H1 (cell line): ENCODE measurements at regions of chr7 and their contacts with region 1.

Region 1: GRCh38 chr7:8035647-8036518 is 67.3 kb downstream of the GLCCI1 start:
- DNase-seq: peak in 1 of 2 experiments; percentile 49
- H3K4me3 ChIP-seq: no peak overlapping the region
- H3K27ac ChIP-seq: no peak overlapping the region
- H3K4me1 ChIP-seq: peaks cover 0 to 2% (median 0%) of the 10 kb centered on the region in 4 experiments; a peak in 3 of 7 replicates
- H3K27me3 ChIP-seq: no peaks in the 10 kb centered on the region
- CTCF ChIP-seq: peak in 2 of 3 experiments; percentile 62 to 71; a peak in 3 of 4 replicates
- EP300 ChIP-seq: no peak
- POLR2A ChIP-seq: no peak
- RAD21 ChIP-seq: peak; percentile 81 to 84

Region 2: GRCh38 chr7:7662527-7662926 is 373.4 kb before region 1 on chr7:
- CTCF ChIA-PET with region 1: interaction called, 11 read pairs
- POLR2A ChIA-PET with region 1: no interaction called
- DNase-seq: peak in 1 of 2 experiments; percentile 52
- H3K4me3 ChIP-seq: no peak overlapping the region
- H3K27ac ChIP-seq: no peak overlapping the region
- H3K4me1 ChIP-seq: no peaks in the 10 kb centered on the region
- H3K27me3 ChIP-seq: no peaks in the 10 kb centered on the region
- CTCF ChIP-seq: peak; percentile 39 to 69 (median 58)
- EP300 ChIP-seq: no peak
- POLR2A ChIP-seq: no peak
- RAD21 ChIP-seq: peak; percentile 82 to 83

Region 3: DNA sequence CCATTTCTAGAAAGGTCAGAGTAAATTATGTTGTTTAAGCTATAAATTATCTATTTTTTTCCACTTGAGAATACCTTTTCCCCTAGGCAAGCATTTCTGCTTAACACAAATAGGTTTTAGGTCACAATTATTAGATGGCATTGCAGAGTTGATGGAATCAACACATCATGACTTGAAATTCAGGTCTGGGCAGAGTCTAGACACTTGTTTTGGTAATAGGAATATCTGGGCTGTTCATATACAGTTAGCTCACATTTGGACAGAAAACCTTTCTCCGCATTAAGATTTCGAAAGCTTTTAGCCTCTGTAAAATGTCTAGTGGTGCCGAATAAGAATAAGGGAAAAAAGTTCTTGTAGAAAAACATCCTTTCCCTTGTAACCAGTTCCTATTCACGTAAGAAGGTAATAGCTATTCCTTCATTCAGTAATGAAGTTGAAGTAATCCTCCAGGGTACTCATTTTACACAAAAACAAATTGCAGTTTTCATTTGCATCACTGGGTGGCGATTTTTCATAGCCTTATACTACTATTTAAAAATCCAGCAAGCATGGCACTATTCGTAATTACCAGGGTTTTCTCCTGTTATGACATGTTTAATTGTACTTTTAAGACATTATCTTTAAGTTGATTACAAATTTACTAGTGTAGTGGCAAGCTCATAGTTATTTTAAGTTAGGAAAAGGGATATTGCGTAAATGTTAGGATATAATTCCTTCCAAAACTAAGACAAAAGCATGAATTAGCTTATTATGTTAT is 354.5 kb before region 1 on chr7:
- CTCF ChIA-PET with region 1: interaction called, 10 read pairs
- POLR2A ChIA-PET with region 1: no interaction called
- DNase-seq: no peak
- H3K4me3 ChIP-seq: no peak overlapping the region
- H3K27ac ChIP-seq: no peak overlapping the region
- H3K4me1 ChIP-seq: no peaks in the 10 kb centered on the region
- H3K27me3 ChIP-seq: no peaks in the 10 kb centered on the region
- CTCF ChIP-seq: peak in 1 of 3 experiments; percentile 33; a peak in 2 of 4 replicates
- EP300 ChIP-seq: no peak
- POLR2A ChIP-seq: no peak
- RAD21 ChIP-seq: peak; percentile 56 to 63

Region 4: GRCh38 chr7:8018961-8019360 is 16.9 kb before region 1 on chr7:
- CTCF ChIA-PET with region 1: interaction called, 22 read pairs
- POLR2A ChIA-PET with region 1: no interaction called
- DNase-seq: no peak
- H3K4me3 ChIP-seq: no peak overlapping the region
- H3K27ac ChIP-seq: no peak overlapping the region
- H3K4me1 ChIP-seq: no peaks in the 10 kb centered on the region
- H3K27me3 ChIP-seq: no peaks in the 10 kb centered on the region
- CTCF ChIP-seq: no peak
- EP300 ChIP-seq: no peak
- POLR2A ChIP-seq: no peak
- RAD21 ChIP-seq: no peak

Region 5: DNA sequence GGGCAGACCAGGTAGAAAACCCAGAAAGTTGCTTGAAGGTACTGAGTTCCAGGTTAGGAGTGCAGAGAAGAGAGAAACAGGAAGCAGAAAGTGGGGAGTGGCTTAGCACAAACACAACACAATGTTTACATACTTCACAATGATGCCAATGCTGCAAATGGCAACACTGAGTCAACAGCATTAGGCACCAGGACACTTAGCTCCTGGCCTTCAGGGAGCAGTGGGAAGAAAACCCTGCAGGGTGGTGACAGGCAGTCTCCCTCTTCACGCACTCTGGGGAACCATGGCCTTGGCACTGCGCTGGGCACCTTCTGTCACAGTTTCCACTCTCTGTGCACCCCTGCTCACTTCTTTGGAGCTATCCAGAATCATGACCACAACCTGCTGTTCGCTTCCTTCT is 218.8 kb after region 1 on chr7:
- CTCF ChIA-PET with region 1: no interaction called
- POLR2A ChIA-PET with region 1: no interaction called
- DNase-seq: no peak
- H3K4me3 ChIP-seq: no peak overlapping the region
- H3K27ac ChIP-seq: no peak overlapping the region
- H3K4me1 ChIP-seq: peaks cover 0 to 6% (median 0%) of the 10 kb centered on the region in 4 experiments; a peak in 3 of 7 replicates
- H3K27me3 ChIP-seq: no peaks in the 10 kb centered on the region
- CTCF ChIP-seq: no peak
- EP300 ChIP-seq: no peak
- POLR2A ChIP-seq: no peak
- RAD21 ChIP-seq: no peak